ENCODE measurements at regions of chr12 and their contacts with region 1.

Region 1: GRCh38 chr12:94101738-94102660 is 46.4 kb upstream of the PLXNC1 start:
- DNase-seq: peak; percentile 82 to 85
- H3K4me3 ChIP-seq: peak overlapping the region; percentile 50
- H3K4me3 Mint-ChIP-seq: peak overlapping the region; percentile 79
- H3K27ac Mint-ChIP-seq: no peak overlapping the region
- H3K4me1 ChIP-seq: peaks cover 28% of the 10 kb centered on the region
- H3K4me1 Mint-ChIP-seq: peaks cover 11% of the 10 kb centered on the region
- H3K27me3 ChIP-seq: no peaks in the 10 kb centered on the region
- H3K27me3 Mint-ChIP-seq: no peaks in the 10 kb centered on the region
- CTCF ChIP-seq: peak; percentile 78 to 81

Region 2: DNA sequence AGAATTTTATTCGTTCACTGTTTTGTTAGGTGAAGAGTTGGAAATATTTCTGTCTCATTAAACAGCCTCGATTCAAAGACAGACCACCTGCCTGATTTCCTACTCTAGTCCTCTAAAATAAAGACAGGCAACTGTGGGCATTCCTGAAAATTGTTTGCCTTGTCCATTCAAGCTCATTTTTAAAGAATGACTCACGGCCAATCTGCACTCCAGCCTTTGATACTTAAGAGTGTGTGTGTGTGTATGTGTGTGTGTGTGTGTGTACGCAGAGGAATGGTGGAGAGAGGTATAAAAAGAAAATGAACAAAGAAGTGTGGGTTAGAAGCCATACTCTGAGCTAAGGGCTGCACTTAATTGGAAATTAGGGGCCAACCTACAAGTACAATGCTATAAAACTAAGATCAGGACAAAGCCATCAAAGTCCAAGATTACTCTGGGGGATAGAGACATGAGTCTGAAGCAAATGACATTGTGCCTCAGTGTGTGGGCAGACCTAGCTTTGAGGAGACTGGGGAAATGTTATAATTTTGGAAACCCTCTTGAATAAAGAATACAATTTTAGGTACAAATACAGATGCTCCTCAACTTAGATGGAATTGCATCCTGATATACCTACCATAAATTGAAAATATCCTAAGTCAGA is 575.1 kb before region 1 on chr12:
- CTCF ChIA-PET with region 1: interaction called, 14 read pairs
- POLR2A ChIA-PET with region 1: no interaction called
- intact Hi-C with region 1: loop called (anchors 1 kb)
- DNase-seq: peak; percentile 84
- H3K4me3 ChIP-seq: no peak overlapping the region
- H3K4me3 Mint-ChIP-seq: peak overlapping the region; percentile 35
- H3K27ac Mint-ChIP-seq: peak overlapping the region; percentile 64
- H3K4me1 ChIP-seq: peaks cover 36% of the 10 kb centered on the region
- H3K4me1 Mint-ChIP-seq: peaks cover 34% of the 10 kb centered on the region
- H3K27me3 ChIP-seq: no peaks in the 10 kb centered on the region
- H3K27me3 Mint-ChIP-seq: no peaks in the 10 kb centered on the region
- CTCF ChIP-seq: no peak

Region 3: DNA sequence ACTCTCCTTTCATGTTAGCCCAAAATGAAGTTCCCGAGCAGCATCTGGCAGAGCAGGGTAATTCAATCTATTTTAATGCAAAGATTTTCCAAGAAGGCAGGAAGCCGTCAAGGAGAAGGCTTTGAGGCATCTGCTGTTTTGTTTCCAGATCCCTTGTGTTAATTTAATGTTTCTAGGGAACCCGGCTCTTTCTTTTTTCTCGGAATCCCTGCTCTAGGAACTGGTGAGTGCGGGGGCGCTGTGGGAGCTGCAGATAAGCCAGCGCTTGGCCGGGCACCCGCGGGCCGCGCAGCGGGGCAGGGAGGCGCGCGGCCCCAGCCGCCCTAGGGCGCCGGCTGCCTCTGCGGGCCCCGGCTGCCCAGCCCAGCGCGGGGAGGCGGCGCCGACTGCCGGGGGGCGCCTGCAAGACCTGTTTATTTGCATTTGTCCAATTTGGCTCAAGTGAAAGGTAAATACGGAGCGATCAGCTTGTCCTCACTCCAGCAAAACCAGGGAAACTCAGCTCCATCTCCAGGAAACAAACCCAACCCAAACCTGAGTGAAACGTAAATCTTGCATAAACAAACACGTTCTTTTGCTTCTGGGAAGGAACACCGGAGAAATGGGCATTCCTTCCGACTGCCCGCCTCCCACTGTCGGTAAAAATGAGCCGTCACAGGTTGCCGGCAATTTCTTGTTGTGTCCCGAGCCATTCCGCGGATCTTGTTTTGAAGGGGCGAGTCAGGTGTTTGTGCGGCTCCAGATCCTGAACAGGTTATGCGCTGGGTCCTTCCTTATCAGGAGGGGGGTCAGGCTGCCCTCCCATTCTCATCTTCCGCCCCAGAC is 359.7 kb before region 1 on chr12:
- CTCF ChIA-PET with region 1: interaction called, 15 read pairs
- POLR2A ChIA-PET with region 1: no interaction called
- intact Hi-C with region 1: loop called (anchors 2 kb)
- DNase-seq: peak; percentile 64 to 83
- H3K4me3 ChIP-seq: peak overlapping the region; percentile 86
- H3K4me3 Mint-ChIP-seq: peak overlapping the region; percentile 74
- H3K27ac Mint-ChIP-seq: peak overlapping the region; percentile 80
- H3K4me1 ChIP-seq: peaks cover 40% of the 10 kb centered on the region
- H3K4me1 Mint-ChIP-seq: peaks cover 15% of the 10 kb centered on the region
- H3K27me3 ChIP-seq: no peaks in the 10 kb centered on the region
- H3K27me3 Mint-ChIP-seq: no peaks in the 10 kb centered on the region
- CTCF ChIP-seq: peak; percentile 27 to 47

Region 4: GRCh38 chr12:93990832-93991803 is 110.9 kb before region 1 on chr12:
- CTCF ChIA-PET with region 1: interaction called, 5 read pairs
- POLR2A ChIA-PET with region 1: no interaction called
- intact Hi-C with region 1: loop called (anchors 5 kb)
- DNase-seq: peak; percentile 49 to 53
- H3K4me3 ChIP-seq: no peak overlapping the region
- H3K4me3 Mint-ChIP-seq: no peak overlapping the region
- H3K27ac Mint-ChIP-seq: no peak overlapping the region
- H3K4me1 ChIP-seq: no peaks in the 10 kb centered on the region
- H3K4me1 Mint-ChIP-seq: no peaks in the 10 kb centered on the region
- H3K27me3 ChIP-seq: no peaks in the 10 kb centered on the region
- H3K27me3 Mint-ChIP-seq: no peaks in the 10 kb centered on the region
- CTCF ChIP-seq: peak in 1 of 2 experiments; percentile 32

Measured in Caco-2 (cell line).